ENCODE measurements at regions of chr1 and their contacts with region 1.

Region 1: GRCh38 chr1:180745098-180745497 is 113.3 kb downstream of the XPR1 start:
- DNase-seq: no peak
- ATAC-seq: peak; percentile 37 to 60 (median 42)
- H3K4me3 ChIP-seq: no peak overlapping the region
- H3K27ac ChIP-seq: no peak overlapping the region
- H3K4me1 ChIP-seq: peaks cover 0 to 7% (median 0%) of the 10 kb centered on the region in 12 donors
- H3K27me3 ChIP-seq: no peaks in the 10 kb centered on the region
- CTCF ChIP-seq: no peak
- POLR2A ChIP-seq: no peak

Region 2: GRCh38 chr1:180494370-180494769 is 250.7 kb before region 1 on chr1:
- intact Hi-C with region 1: no loop called
- DNase-seq: no peak
- ATAC-seq: no peak
- H3K4me3 ChIP-seq: no peak overlapping the region
- H3K27ac ChIP-seq: no peak overlapping the region
- H3K4me1 ChIP-seq: peaks cover 0 to 6% (median 0%) of the 10 kb centered on the region in 12 donors
- H3K27me3 ChIP-seq: no peaks in the 10 kb centered on the region
- CTCF ChIP-seq: no peak
- POLR2A ChIP-seq: no peak

Region 3: GRCh38 chr1:180571832-180572636 is 173.1 kb before region 1 on chr1:
- intact Hi-C with region 1: no loop called
- DNase-seq: no peak
- ATAC-seq: no peak
- H3K4me3 ChIP-seq: no peak overlapping the region
- H3K27ac ChIP-seq: peak overlapping the region in 1 of 12 donors; percentile 10
- H3K4me1 ChIP-seq: peaks cover under 1 to 34% (median 9%) of the 10 kb centered on the region in 12 donors
- H3K27me3 ChIP-seq: no peaks in the 10 kb centered on the region
- CTCF ChIP-seq: no peak
- POLR2A ChIP-seq: no peak

Region 4: GRCh38 chr1:180674603-180675530 is 70.2 kb before region 1 on chr1:
- intact Hi-C with region 1: loop called in 1 of 10 experiments (anchors 10 kb)
- DNase-seq: no peak
- ATAC-seq: peak in 2 of 4 donors; percentile 29 to 39
- H3K4me3 ChIP-seq: no peak overlapping the region
- H3K27ac ChIP-seq: no peak overlapping the region
- H3K4me1 ChIP-seq: peaks cover 0 to 32% (median 2%) of the 10 kb centered on the region in 12 donors
- H3K27me3 ChIP-seq: no peaks in the 10 kb centered on the region
- CTCF ChIP-seq: no peak
- POLR2A ChIP-seq: no peak

Measured in heart left ventricle (tissue), 16 donors.